SK-N-SH (cell line): ENCODE measurements at regions of chr2 and their contacts with region 1.

Region 1: DNA sequence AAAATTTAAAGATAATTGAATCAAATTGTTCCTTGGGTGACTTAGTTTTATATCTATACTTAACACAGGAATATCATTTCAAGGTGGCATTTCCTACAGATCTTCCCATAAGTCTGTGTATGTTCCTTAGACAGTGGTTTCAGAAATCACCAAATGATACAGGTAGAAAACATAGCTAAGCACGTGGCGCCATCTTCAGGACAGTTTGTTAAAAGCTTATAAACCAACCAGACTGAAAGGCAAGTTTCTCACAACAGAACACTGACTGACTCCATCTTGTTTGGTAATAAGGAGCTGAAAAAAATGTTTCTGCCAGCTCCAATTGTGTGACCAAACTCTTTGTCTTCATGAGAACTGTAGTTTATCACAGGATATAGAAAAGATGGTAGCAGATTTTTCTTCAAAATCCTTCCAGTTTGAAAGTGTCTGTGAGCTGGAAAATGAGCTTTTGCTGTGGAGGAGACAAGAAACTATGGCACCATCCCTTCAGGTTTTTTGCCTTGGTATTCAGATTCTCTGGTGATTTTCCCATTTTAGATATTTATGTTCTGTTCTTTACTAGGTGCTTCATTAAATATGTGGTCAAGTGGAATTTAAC is 34.8 kb upstream of the NEUROD1 start:
- DNase-seq: peak; percentile 51
- H3K4me3 ChIP-seq: no peak overlapping the region; a peak in 1 of 4 replicates
- H3K27ac ChIP-seq: no peak overlapping the region
- H3K4me1 ChIP-seq: no peaks in the 10 kb centered on the region
- H3K27me3 ChIP-seq: no peaks in the 10 kb centered on the region
- CTCF ChIP-seq: peak; percentile 85
- EP300 ChIP-seq: no peak
- RAD21 ChIP-seq: peak; percentile 99

Region 2: DNA sequence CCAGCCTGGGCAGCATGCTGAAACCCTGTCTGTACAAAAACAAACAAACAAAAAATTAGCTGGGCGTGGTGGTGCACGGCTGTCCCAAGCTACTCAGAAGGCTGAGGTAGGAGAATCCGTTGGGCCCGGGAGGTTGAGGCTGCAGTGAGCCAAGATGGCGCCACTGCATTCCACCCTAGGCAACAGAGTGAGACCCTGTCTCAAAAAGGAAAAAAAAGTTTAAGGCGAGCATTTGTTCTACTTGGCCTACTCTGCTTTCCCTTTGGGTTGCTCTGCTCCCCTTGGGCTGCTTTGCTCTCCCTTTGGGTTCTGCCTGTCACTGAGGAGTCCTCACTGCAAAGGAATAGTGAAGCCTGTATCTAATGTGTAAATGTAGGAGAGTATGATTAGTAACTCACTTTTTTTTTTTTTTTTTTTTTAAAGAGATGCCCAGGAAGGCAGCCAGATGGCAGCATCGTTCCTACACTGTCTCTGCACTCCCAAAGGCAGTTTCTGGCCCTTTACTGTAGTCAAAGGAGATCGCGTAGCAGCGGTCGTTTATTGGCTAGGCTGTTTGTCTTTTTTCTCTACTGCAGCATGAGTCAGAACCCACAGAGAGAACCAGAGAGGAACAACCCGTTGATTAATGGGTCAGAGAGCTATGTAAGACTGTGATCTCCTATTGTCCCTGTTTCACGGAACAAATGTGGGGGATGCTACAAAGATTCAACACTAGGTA is 1589.7 kb before region 1 on chr2:
- CTCF ChIA-PET with region 1: interaction called, 39 read pairs
- POLR2A ChIA-PET with region 1: no interaction called
- DNase-seq: peak; percentile 48
- H3K4me3 ChIP-seq: no peak overlapping the region; a peak in 1 of 4 replicates
- H3K27ac ChIP-seq: peak overlapping the region in 1 of 2 experiments; percentile 2; a peak in 1 of 4 replicates
- H3K4me1 ChIP-seq: peaks cover 2 to 3% of the 10 kb centered on the region in 2 experiments; a peak in 2 of 4 replicates
- H3K27me3 ChIP-seq: no peaks in the 10 kb centered on the region
- CTCF ChIP-seq: peak; percentile 70
- EP300 ChIP-seq: no peak; a peak in 1 of 4 replicates
- RAD21 ChIP-seq: peak; percentile 89

Region 3: GRCh38 chr2:181466661-181467576 is 248.2 kb before region 1 on chr2:
- CTCF ChIA-PET with region 1: interaction called, 10 read pairs
- POLR2A ChIA-PET with region 1: no interaction called
- DNase-seq: peak; percentile 15
- H3K4me3 ChIP-seq: no peak overlapping the region
- H3K27ac ChIP-seq: peak overlapping the region in 1 of 2 experiments; percentile 42; a peak in 1 of 4 replicates
- H3K4me1 ChIP-seq: peaks cover 0 to 7% of the 10 kb centered on the region in 2 experiments; a peak in 2 of 4 replicates
- H3K27me3 ChIP-seq: no peaks in the 10 kb centered on the region
- CTCF ChIP-seq: peak; percentile 90
- EP300 ChIP-seq: no peak
- RAD21 ChIP-seq: peak; percentile 57

Region 4: GRCh38 chr2:181578829-181579228 is 136.3 kb before region 1 on chr2:
- CTCF ChIA-PET with region 1: interaction called, 213 read pairs
- POLR2A ChIA-PET with region 1: no interaction called
- DNase-seq: no peak
- H3K4me3 ChIP-seq: no peak overlapping the region
- H3K27ac ChIP-seq: no peak overlapping the region
- H3K4me1 ChIP-seq: peaks cover 0 to 3% of the 10 kb centered on the region in 2 experiments; a peak in 1 of 4 replicates
- H3K27me3 ChIP-seq: no peaks in the 10 kb centered on the region
- CTCF ChIP-seq: no peak
- EP300 ChIP-seq: no peak
- RAD21 ChIP-seq: no peak

Region 5: DNA sequence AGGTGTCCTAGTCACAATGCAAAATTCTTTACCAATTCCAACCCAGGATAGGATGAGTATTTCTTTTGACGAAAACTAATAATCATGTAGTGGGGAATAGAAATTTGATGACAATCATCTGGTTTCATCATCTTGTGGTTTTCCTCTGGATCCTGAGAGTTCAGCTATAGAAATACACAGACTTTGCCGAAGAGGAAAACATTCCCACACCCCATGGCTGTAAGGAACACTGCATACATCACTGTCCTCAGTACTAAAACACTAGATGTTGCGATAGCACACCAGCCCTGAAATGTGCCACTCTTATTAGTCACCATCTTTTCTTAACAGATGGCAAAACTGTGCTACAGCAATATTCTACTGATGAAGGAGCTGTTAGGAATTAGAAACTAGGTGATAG is 87.6 kb before region 1 on chr2:
- CTCF ChIA-PET with region 1: no interaction called
- POLR2A ChIA-PET with region 1: no interaction called
- DNase-seq: no peak
- H3K4me3 ChIP-seq: no peak overlapping the region
- H3K27ac ChIP-seq: no peak overlapping the region
- H3K4me1 ChIP-seq: no peaks in the 10 kb centered on the region; a peak in 2 of 4 replicates
- H3K27me3 ChIP-seq: no peaks in the 10 kb centered on the region; the same call in 1 of the 2 replicates
- CTCF ChIP-seq: no peak
- EP300 ChIP-seq: no peak
- RAD21 ChIP-seq: no peak

Region 6: GRCh38 chr2:181752301-181752700 is 37.2 kb after region 1 on chr2:
- CTCF ChIA-PET with region 1: no interaction called
- POLR2A ChIA-PET with region 1: no interaction called
- DNase-seq: no peak
- H3K4me3 ChIP-seq: no peak overlapping the region
- H3K27ac ChIP-seq: no peak overlapping the region
- H3K4me1 ChIP-seq: peaks cover 0 to 7% of the 10 kb centered on the region in 2 experiments; a peak in 2 of 4 replicates
- H3K27me3 ChIP-seq: no peaks in the 10 kb centered on the region
- CTCF ChIP-seq: no peak
- EP300 ChIP-seq: no peak
- RAD21 ChIP-seq: no peak

Region 7: GRCh38 chr2:181810823-181811695 is 95.9 kb after region 1 on chr2:
- CTCF ChIA-PET with region 1: no interaction called
- POLR2A ChIA-PET with region 1: no interaction called
- DNase-seq: peak; percentile 1
- H3K4me3 ChIP-seq: peak overlapping the region in 1 of 2 experiments; percentile 28; a peak in 2 of 4 replicates
- H3K27ac ChIP-seq: peak overlapping the region; percentile 80 to 96
- H3K4me1 ChIP-seq: peaks cover 2 to 41% of the 10 kb centered on the region in 2 experiments
- H3K27me3 ChIP-seq: no peaks in the 10 kb centered on the region
- CTCF ChIP-seq: no peak
- EP300 ChIP-seq: peak; percentile 40 to 97; a peak in 3 of 4 replicates
- RAD21 ChIP-seq: no peak

Region 8: GRCh38 chr2:182077451-182078142 is 362.5 kb after region 1 on chr2:
- CTCF ChIA-PET with region 1: interaction called, 14 read pairs
- POLR2A ChIA-PET with region 1: no interaction called
- DNase-seq: peak; percentile 28
- H3K4me3 ChIP-seq: no peak overlapping the region; a peak in 1 of 4 replicates
- H3K27ac ChIP-seq: peak overlapping the region in 1 of 2 experiments; percentile 3; a peak in 1 of 4 replicates
- H3K4me1 ChIP-seq: peaks cover 0 to 9% of the 10 kb centered on the region in 2 experiments; a peak in 2 of 4 replicates
- H3K27me3 ChIP-seq: no peaks in the 10 kb centered on the region
- CTCF ChIP-seq: peak; percentile 83
- EP300 ChIP-seq: 0 out of 4 replicates have a peak, but pooled peaks of 1 of the 2 experiments have one; percentile 29
- RAD21 ChIP-seq: peak; percentile 77